HepG2 (cell line): ENCODE measurements at regions of chr17 and their contacts with region 1.

Region 1: GRCh38 chr17:64025732-64026294 is 5.4 kb upstream of the ICAM2 start:
- DNase-seq: peak; percentile 82
- ATAC-seq: peak; percentile 89
- H3K4me3 ChIP-seq: peak overlapping the region in 1 of 3 experiments; percentile 47; a peak in 4 of 6 replicates
- H3K27ac ChIP-seq: no peak overlapping the region
- H3K4me1 ChIP-seq: peaks cover 52% of the 10 kb centered on the region
- H3K27me3 ChIP-seq: no peaks in the 10 kb centered on the region
- CTCF ChIP-seq: peak; percentile 99
- EP300 ChIP-seq: peak in 1 of 2 experiments; percentile 42; a peak in 1 of 4 replicates
- POLR2A ChIP-seq: no peak
- RAD21 ChIP-seq: peak; percentile 66; the same call in 1 of the 2 replicates

Region 2: DNA sequence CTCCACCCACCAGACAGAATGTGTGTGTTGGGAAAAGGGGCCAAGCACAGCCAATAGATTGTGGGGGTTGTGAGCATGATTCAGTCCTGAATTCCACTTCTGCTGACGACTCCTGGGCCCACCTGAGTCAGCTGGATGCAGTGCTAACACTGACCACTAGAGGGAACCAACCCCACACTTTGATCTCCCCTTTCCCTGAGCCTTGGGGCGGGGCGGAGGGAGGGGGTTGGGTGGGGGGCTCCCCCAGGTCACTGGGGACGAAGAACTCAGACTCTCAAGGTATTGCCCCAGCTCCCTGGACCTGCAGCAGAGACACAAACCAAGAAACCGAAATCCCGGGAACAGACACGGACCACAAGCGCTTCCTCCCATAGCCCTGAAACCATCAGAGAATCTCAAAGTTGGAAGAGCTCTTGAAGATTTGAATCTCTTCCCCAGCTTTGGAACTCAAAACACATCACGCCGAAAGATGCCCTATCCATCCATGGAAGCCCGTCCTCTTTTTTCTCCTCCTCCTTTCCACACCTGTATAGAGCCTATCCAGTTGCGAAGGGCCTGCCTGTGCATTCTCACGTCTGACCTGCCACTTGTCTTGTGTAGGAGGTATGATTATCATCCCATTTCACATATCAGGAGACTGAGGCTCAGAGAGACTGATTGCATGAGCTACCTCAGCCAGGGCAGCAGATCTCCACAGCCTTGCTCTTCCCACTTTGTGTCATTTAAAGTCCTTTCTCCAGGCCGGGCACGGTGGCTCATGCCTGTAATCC is 114.0 kb before region 1 on chr17:
- CTCF ChIA-PET with region 1: interaction called, 10 read pairs
- POLR2A ChIA-PET with region 1: no interaction called
- in situ Hi-C with region 1: no loop called
- intact Hi-C with region 1: loop called (anchors 5 kb)
- DNase-seq: no peak
- ATAC-seq: peak; percentile 80
- H3K4me3 ChIP-seq: no peak overlapping the region
- H3K27ac ChIP-seq: no peak overlapping the region
- H3K4me1 ChIP-seq: peaks cover 10% of the 10 kb centered on the region
- H3K27me3 ChIP-seq: peaks cover 4 to 54% of the 10 kb centered on the region in 2 experiments; a peak in 4 of 5 replicates
- CTCF ChIP-seq: peak; percentile 77
- EP300 ChIP-seq: no peak
- POLR2A ChIP-seq: no peak
- RAD21 ChIP-seq: no peak

Region 3: GRCh38 chr17:63919311-63919723 is 106.5 kb before region 1 on chr17:
- CTCF ChIA-PET with region 1: interaction called, 9 read pairs
- POLR2A ChIA-PET with region 1: no interaction called
- in situ Hi-C with region 1: no loop called
- intact Hi-C with region 1: loop called (anchors 5 kb)
- DNase-seq: peak; percentile 44
- ATAC-seq: peak; percentile 92
- H3K4me3 ChIP-seq: no peak overlapping the region
- H3K27ac ChIP-seq: no peak overlapping the region
- H3K4me1 ChIP-seq: peaks cover 16% of the 10 kb centered on the region
- H3K27me3 ChIP-seq: peaks cover under 1 to 24% of the 10 kb centered on the region in 2 experiments; a peak in 3 of 5 replicates
- CTCF ChIP-seq: peak; percentile 94
- EP300 ChIP-seq: no peak
- POLR2A ChIP-seq: no peak
- RAD21 ChIP-seq: peak; percentile 90

Region 4: GRCh38 chr17:64056269-64057005 is 30.6 kb after region 1 on chr17:
- CTCF ChIA-PET with region 1: no interaction called
- POLR2A ChIA-PET with region 1: no interaction called
- in situ Hi-C with region 1: no loop called
- intact Hi-C with region 1: no loop called
- DNase-seq: no peak
- ATAC-seq: 0 out of 3 replicates have a peak, but pooled peaks have one; percentile 21
- H3K4me3 ChIP-seq: no peak overlapping the region
- H3K27ac ChIP-seq: no peak overlapping the region
- H3K4me1 ChIP-seq: peaks cover 29% of the 10 kb centered on the region
- H3K27me3 ChIP-seq: no peaks in the 10 kb centered on the region
- CTCF ChIP-seq: no peak
- EP300 ChIP-seq: no peak
- POLR2A ChIP-seq: no peak
- RAD21 ChIP-seq: no peak

Region 5: GRCh38 chr17:64281962-64282727 is 256.3 kb after region 1 on chr17:
- CTCF ChIA-PET with region 1: interaction called, 5 read pairs
- POLR2A ChIA-PET with region 1: no interaction called
- in situ Hi-C with region 1: no loop called
- intact Hi-C with region 1: loop called (anchors 2 kb)
- DNase-seq: peak; percentile 72
- ATAC-seq: peak; percentile 48
- H3K4me3 ChIP-seq: no peak overlapping the region
- H3K27ac ChIP-seq: no peak overlapping the region
- H3K4me1 ChIP-seq: peaks cover 31% of the 10 kb centered on the region
- H3K27me3 ChIP-seq: no peaks in the 10 kb centered on the region; a peak in 1 of 5 replicates
- CTCF ChIP-seq: peak; percentile 85
- EP300 ChIP-seq: no peak
- POLR2A ChIP-seq: no peak
- RAD21 ChIP-seq: peak; percentile 85